Activated B cell treated with CpG ODN at 0.5 μM for 24 hours (primary cell): ENCODE measurements at regions of chrX and their contacts with region 1.

Region 1: DNA sequence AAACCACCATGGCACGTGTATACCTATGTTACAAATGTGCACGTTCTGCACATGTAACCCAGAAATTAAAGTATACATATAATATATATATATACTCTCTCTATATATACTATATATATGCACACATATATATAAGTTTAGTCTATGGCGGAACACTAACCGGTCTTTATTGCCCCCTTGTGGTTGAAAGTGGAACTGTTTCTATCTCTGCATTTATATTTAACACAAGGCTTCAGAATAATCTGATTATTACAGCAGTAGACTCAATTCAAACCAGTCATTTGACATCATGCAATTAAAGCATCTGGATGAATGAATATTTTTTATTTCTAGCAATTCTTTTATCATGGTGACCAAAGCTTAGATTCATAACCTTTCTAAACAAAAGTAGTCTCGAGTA is 14.6 kb downstream of the RAB9B start:
- DNase-seq: no peak
- ATAC-seq: peak; percentile 37
- H3K4me3 Mint-ChIP-seq: no peak overlapping the region
- H3K27ac Mint-ChIP-seq: no peak overlapping the region
- H3K4me1 Mint-ChIP-seq: peaks cover 2% of the 10 kb centered on the region
- H3K27me3 Mint-ChIP-seq: no peaks in the 10 kb centered on the region
- CTCF ChIP-seq: no peak

Region 2: GRCh38 chrX:103533511-103534216 is 283.8 kb before region 1 on chrX:
- CTCF ChIA-PET with region 1: interaction called, 11 read pairs
- POLR2A ChIA-PET with region 1: no interaction called
- intact Hi-C with region 1: loop called (anchors 1 kb)
- DNase-seq: peak; percentile 45
- ATAC-seq: peak; percentile 40
- H3K4me3 Mint-ChIP-seq: peak overlapping the region; percentile 61
- H3K27ac Mint-ChIP-seq: no peak overlapping the region
- H3K4me1 Mint-ChIP-seq: peaks cover 5% of the 10 kb centered on the region
- H3K27me3 Mint-ChIP-seq: no peaks in the 10 kb centered on the region
- CTCF ChIP-seq: no peak

Region 3: DNA sequence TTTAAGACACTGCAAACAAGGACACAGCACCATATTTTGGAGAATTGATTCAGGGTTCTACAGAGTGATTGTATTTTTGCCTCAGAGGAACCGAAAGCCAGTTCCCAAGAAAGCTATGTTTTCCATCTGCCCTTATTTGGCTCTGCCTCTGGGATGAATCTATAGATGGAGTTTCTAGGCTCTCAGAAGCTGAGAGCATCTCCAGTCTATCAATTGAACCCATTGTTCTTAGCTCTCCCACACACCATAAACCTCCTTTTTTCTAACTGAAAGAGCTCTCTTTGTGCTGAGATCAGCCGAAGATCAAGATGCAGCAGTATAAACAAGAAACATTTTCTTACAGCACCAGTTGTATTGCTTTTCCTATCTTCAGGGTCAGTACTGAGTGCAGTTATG is 24.0 kb before region 1 on chrX:
- CTCF ChIA-PET with region 1: no interaction called
- POLR2A ChIA-PET with region 1: no interaction called
- intact Hi-C with region 1: no loop called
- DNase-seq: no peak
- ATAC-seq: no peak
- H3K4me3 Mint-ChIP-seq: no peak overlapping the region
- H3K27ac Mint-ChIP-seq: no peak overlapping the region
- H3K4me1 Mint-ChIP-seq: peaks cover 13% of the 10 kb centered on the region
- H3K27me3 Mint-ChIP-seq: no peaks in the 10 kb centered on the region
- CTCF ChIP-seq: no peak

Region 4: DNA sequence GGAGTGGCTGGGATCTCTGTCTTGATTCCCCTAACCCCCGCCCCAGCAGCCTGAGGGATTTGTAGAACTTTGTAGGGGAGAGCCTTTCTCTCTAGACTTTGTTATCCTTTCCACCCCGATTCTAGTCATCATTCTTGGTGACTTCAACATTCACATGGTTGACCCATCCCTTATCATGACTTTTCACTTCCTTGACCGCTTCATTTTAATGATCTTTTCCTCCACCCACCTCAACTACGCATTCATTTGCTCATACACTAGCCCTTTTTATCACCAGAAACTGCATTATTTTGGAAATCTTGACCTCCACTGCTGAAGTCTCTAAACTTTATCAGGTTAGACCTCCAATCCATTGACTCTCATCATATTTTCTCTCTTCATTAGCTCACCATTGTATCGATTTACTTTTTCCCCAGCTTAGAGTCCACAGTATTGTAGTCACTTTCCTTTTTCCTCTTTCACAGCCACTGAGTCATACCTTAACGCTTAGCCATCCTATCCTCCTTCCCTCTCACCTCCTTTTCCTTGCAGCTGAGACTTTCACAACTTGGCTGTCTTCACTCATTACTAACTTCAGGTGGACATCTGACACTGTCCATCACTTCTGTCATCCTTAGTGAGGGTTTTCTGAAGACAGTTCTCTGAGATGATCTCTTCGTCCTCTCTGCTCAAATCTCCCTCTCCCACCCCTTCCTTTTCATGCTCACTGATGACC is 507.5 kb after region 1 on chrX:
- CTCF ChIA-PET with region 1: no interaction called
- POLR2A ChIA-PET with region 1: no interaction called
- intact Hi-C with region 1: no loop called
- DNase-seq: no peak
- ATAC-seq: no peak
- H3K4me3 Mint-ChIP-seq: no peak overlapping the region
- H3K27ac Mint-ChIP-seq: no peak overlapping the region
- H3K4me1 Mint-ChIP-seq: no peaks in the 10 kb centered on the region
- H3K27me3 Mint-ChIP-seq: no peaks in the 10 kb centered on the region
- CTCF ChIP-seq: no peak